ENCODE measurements at regions of chr1 and their contacts with region 1.

Region 1: GRCh38 chr1:100249537-100250257 is at the start of gene DBT:
- DNase-seq: peak; percentile 92
- ATAC-seq: peak; percentile 100
- H3K4me3 ChIP-seq: peak within 1 kb of the TSS; percentile 64 to 96 (median 71)
- H3K27ac ChIP-seq: peak within 1 kb of the TSS; percentile 81
- H3K4me1 ChIP-seq: peaks cover 37% of the 10 kb centered on the region
- H3K27me3 ChIP-seq: peaks cover 0 to 3% of the 10 kb centered on the region in 2 experiments; a peak in 1 of 5 replicates
- CTCF ChIP-seq: no peak
- EP300 ChIP-seq: no peak
- POLR2A ChIP-seq: peak; percentile 93 to 96
- RAD21 ChIP-seq: no peak
- total RNA-seq, gene DBT: 10.2 and 15.8 TPM in 2 replicates

Region 2: DNA sequence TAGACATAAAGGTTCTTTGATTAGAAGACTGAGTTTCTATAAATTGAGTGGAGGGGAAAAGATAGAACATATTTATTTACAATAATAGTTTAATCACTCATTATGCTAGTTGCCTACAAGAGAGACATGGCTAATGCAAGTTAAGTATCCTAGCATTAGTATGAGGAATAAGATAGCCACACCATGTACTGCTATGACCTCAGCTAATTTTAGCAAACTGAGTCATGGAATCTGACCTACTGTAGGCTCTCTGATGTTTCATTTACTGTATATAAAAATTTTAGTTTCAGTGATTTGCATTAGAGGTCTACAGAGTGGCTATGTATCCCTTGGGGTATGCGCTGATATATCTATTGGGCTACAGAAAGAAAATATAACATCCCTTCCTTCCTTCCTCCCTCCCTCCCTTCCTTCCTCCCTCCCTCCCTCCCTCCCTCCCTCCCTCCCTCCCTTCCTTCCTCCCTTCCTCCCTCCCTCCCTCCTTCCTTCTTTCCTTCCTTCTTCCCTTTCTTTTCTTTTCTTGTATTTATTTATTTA is 393.7 kb before region 1 on chr1:
- CTCF ChIA-PET with region 1: no interaction called
- POLR2A ChIA-PET with region 1: no interaction called
- in situ Hi-C with region 1: no loop called
- intact Hi-C with region 1: no loop called
- DNase-seq: no peak
- ATAC-seq: no peak
- H3K4me3 ChIP-seq: no peak overlapping the region
- H3K27ac ChIP-seq: no peak overlapping the region
- H3K4me1 ChIP-seq: peaks cover 15% of the 10 kb centered on the region
- H3K27me3 ChIP-seq: no peaks in the 10 kb centered on the region
- CTCF ChIP-seq: no peak
- EP300 ChIP-seq: no peak
- POLR2A ChIP-seq: no peak
- RAD21 ChIP-seq: no peak

Region 3: GRCh38 chr1:100231721-100232120 is 18.0 kb before region 1 on chr1:
- CTCF ChIA-PET with region 1: no interaction called
- POLR2A ChIA-PET with region 1: no interaction called
- in situ Hi-C with region 1: no loop called
- intact Hi-C with region 1: no loop called
- DNase-seq: no peak
- ATAC-seq: no peak
- H3K4me3 ChIP-seq: no peak overlapping the region
- H3K27ac ChIP-seq: no peak overlapping the region
- H3K4me1 ChIP-seq: no peaks in the 10 kb centered on the region
- H3K27me3 ChIP-seq: peaks cover 0 to 1% of the 10 kb centered on the region in 2 experiments; a peak in 1 of 5 replicates
- CTCF ChIP-seq: no peak
- EP300 ChIP-seq: no peak
- POLR2A ChIP-seq: no peak
- RAD21 ChIP-seq: no peak

Region 4: DNA sequence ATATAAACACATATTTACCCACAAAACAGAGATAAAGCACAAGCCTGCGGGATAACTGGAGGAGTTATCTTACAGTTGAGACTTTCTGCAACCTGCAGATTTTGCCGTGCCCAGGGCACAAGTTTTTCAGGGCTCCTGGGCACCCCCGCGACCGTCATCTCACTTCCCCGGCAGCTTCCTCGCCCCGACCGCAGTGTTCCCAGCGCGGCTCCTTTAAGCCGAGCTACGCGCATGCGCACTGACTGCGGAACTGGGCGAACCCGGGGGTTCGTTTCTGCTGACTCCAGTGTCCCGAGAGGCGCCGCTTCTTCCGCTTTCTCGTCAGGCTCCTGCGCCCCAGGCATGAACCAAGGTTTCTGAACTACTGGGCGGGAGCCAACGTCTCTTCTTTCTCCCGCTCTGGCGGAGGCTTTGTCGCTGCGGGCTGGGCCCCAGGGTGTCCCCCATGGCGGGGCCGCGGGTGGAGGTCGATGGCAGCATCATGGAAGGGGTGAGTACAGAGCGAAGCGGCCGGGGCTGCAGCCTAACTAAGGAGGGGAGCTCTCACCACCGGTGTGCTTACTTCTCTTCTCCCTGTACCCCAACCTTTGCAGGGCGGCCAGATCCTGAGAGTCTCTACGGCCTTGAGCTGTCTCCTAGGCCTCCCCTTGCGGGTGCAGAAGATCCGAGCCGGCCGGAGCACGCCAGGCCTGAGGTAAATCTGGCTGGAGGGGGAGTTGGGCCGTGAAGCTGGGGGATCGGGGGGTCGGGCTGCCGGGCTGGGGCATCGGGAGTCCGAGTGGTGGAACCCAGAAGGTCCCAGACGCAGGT is 16.4 kb after region 1 on chr1 and contains the start of gene RTCA:
- CTCF ChIA-PET with region 1: no interaction called
- POLR2A ChIA-PET with region 1: interaction called, 69 read pairs
- in situ Hi-C with region 1: no loop called
- intact Hi-C with region 1: loop called (anchors 2 kb)
- DNase-seq: peak; percentile 90
- ATAC-seq: peak; percentile 97
- H3K4me3 ChIP-seq: peak within 1 kb of the TSS; percentile 94 to 99 (median 98)
- H3K27ac ChIP-seq: peak within 1 kb of the TSS; percentile 89
- H3K4me1 ChIP-seq: peaks cover 39% of the 10 kb centered on the region
- H3K27me3 ChIP-seq: no peaks in the 10 kb centered on the region; a peak in 1 of 5 replicates
- CTCF ChIP-seq: no peak
- EP300 ChIP-seq: no peak
- POLR2A ChIP-seq: peak; percentile 81 to 84
- RAD21 ChIP-seq: no peak
- total RNA-seq, gene RTCA: 31.0 and 37.7 TPM in 2 replicates

Region 5: DNA sequence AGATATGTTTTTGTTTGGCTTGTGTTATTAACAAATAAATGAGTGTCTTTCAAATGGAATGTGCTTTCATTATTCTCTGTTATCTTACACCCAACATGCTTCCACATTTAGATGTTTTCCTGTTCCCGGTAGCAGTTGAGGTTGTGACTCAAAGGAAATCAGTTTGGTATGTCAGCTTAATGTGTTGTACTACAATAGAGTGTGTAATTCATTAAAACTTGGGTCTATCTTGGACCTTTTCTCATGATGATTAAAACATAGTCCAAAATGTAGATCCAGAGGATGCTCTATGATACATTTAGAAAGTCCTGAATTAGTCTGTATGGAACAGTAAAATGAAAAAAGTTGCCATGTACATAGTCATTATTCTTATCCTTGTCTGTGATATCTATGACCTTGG is 43.0 kb after region 1 on chr1:
- CTCF ChIA-PET with region 1: no interaction called
- POLR2A ChIA-PET with region 1: no interaction called
- in situ Hi-C with region 1: no loop called
- intact Hi-C with region 1: no loop called
- DNase-seq: no peak
- ATAC-seq: no peak
- H3K4me3 ChIP-seq: no peak overlapping the region
- H3K27ac ChIP-seq: no peak overlapping the region
- H3K4me1 ChIP-seq: no peaks in the 10 kb centered on the region
- H3K27me3 ChIP-seq: no peaks in the 10 kb centered on the region
- CTCF ChIP-seq: no peak
- EP300 ChIP-seq: no peak
- POLR2A ChIP-seq: no peak
- RAD21 ChIP-seq: no peak